Naive thymus-derived CD4-positive, alpha-beta T cell (primary cell): ENCODE measurements at regions of chr12 and their contacts with region 1.

Region 1: GRCh38 chr12:122190842-122191668 is 8.1 kb downstream of the LRRC43 start:
- DNase-seq: peak in 8 of 9 donors; percentile 29 to 70 (median 55)
- ATAC-seq: peak; percentile 89
- H3K4me3 ChIP-seq: no peak overlapping the region
- H3K4me3 Mint-ChIP-seq: no peak overlapping the region
- H3K27ac ChIP-seq: no peak overlapping the region
- H3K27ac Mint-ChIP-seq: no peak overlapping the region
- H3K4me1 ChIP-seq: no peaks in the 10 kb centered on the region
- H3K4me1 Mint-ChIP-seq: peaks cover 0 to 6% (median 0%) of the 10 kb centered on the region in 7 donors
- H3K27me3 ChIP-seq: no peaks in the 10 kb centered on the region
- H3K27me3 Mint-ChIP-seq: peaks cover 0 to 12% (median 0%) of the 10 kb centered on the region in 5 donors

Region 2: GRCh38 chr12:122051231-122051876 is 139.7 kb before region 1 on chr12:
- CTCF ChIA-PET with region 1: interaction called, 11 read pairs
- POLR2A ChIA-PET with region 1: no interaction called
- intact Hi-C with region 1: loop called (anchors 1 kb)
- DNase-seq: no peak
- ATAC-seq: no peak
- H3K4me3 ChIP-seq: no peak overlapping the region
- H3K4me3 Mint-ChIP-seq: no peak overlapping the region
- H3K27ac ChIP-seq: no peak overlapping the region
- H3K27ac Mint-ChIP-seq: no peak overlapping the region
- H3K4me1 ChIP-seq: no peaks in the 10 kb centered on the region
- H3K4me1 Mint-ChIP-seq: peaks cover 0 to 7% (median 5%) of the 10 kb centered on the region in 7 donors
- H3K27me3 ChIP-seq: no peaks in the 10 kb centered on the region
- H3K27me3 Mint-ChIP-seq: no peaks in the 10 kb centered on the region

Region 3: GRCh38 chr12:122137681-122138080 is 53.4 kb before region 1 on chr12:
- CTCF ChIA-PET with region 1: no interaction called
- POLR2A ChIA-PET with region 1: no interaction called
- intact Hi-C with region 1: no loop called
- DNase-seq: no peak
- ATAC-seq: peak; percentile 37
- H3K4me3 ChIP-seq: no peak overlapping the region
- H3K4me3 Mint-ChIP-seq: no peak overlapping the region
- H3K27ac ChIP-seq: no peak overlapping the region
- H3K27ac Mint-ChIP-seq: peak overlapping the region in 1 of 9 donors; percentile 38
- H3K4me1 ChIP-seq: no peaks in the 10 kb centered on the region
- H3K4me1 Mint-ChIP-seq: peaks cover 0 to 4% (median 0%) of the 10 kb centered on the region in 7 donors
- H3K27me3 ChIP-seq: no peaks in the 10 kb centered on the region
- H3K27me3 Mint-ChIP-seq: no peaks in the 10 kb centered on the region

Region 4: DNA sequence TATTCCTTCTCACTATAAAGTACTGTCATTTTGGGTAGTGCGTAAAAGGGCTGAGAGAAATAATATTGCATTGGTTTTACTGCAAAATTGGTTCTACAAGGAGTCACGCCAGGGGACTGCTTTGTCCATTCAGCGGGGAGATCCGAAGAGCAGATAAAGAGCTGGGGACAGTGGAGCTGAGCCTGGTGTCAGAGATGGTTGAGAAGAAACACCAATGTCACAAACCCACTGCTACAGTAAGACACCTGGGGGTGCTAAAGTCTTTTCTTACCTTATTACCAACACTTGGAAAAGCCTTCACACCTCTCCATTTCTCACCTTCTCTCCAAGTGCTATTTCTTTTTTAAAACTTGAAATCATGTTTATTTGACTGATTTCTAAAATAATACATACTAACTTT is 31.2 kb before region 1 on chr12:
- CTCF ChIA-PET with region 1: no interaction called
- POLR2A ChIA-PET with region 1: no interaction called
- intact Hi-C with region 1: loop called in 1 of 2 experiments (anchors 2 kb)
- DNase-seq: no peak
- ATAC-seq: no peak
- H3K4me3 ChIP-seq: no peak overlapping the region
- H3K4me3 Mint-ChIP-seq: no peak overlapping the region
- H3K27ac ChIP-seq: no peak overlapping the region
- H3K27ac Mint-ChIP-seq: no peak overlapping the region
- H3K4me1 ChIP-seq: peaks cover 0 to 13% of the 10 kb centered on the region in 2 donors
- H3K4me1 Mint-ChIP-seq: peaks cover 0 to 11% (median 0%) of the 10 kb centered on the region in 7 donors
- H3K27me3 ChIP-seq: no peaks in the 10 kb centered on the region
- H3K27me3 Mint-ChIP-seq: peaks cover 0 to 3% (median 0%) of the 10 kb centered on the region in 5 donors